GM12878 (cell line): ENCODE measurements at regions of chr1 and their contacts with region 1.

Region 1: GRCh38 chr1:51235673-51236530 is at the start of gene RNF11:
- DNase-seq: peak; percentile 54
- ATAC-seq: peak; percentile 87
- H3K4me3 ChIP-seq: peak within 1 kb of the TSS; percentile 99
- H3K27ac ChIP-seq: peak within 1 kb of the TSS; percentile 72
- H3K4me1 ChIP-seq: peaks cover 27% of the 10 kb centered on the region
- H3K27me3 ChIP-seq: no peaks in the 10 kb centered on the region
- CTCF ChIP-seq: no peak
- EP300 ChIP-seq: peak in 1 of 2 experiments; percentile 14; a peak in 1 of 4 replicates
- POLR2A ChIP-seq: peak; percentile 92
- RAD21 ChIP-seq: no peak
- polyA plus RNA-seq, gene RNF11: 9.5 to 14.5 TPM

Region 2: GRCh38 chr1:51247022-51247421 is 11.1 kb after region 1 on chr1:
- CTCF ChIA-PET with region 1: interaction called, 8 read pairs
- POLR2A ChIA-PET with region 1: interaction called, 7 read pairs
- RAD21 ChIA-PET with region 1: interaction called, 11 read pairs
- SMC1A ChIA-PET with region 1: interaction called, 13 read pairs
- in situ Hi-C with region 1: no loop called
- intact Hi-C with region 1: no loop called
- DNase-seq: no peak
- ATAC-seq: peak; percentile 96
- H3K4me3 ChIP-seq: no peak overlapping the region
- H3K27ac ChIP-seq: peak overlapping the region; percentile 37
- H3K4me1 ChIP-seq: peaks cover 23% of the 10 kb centered on the region
- H3K27me3 ChIP-seq: no peaks in the 10 kb centered on the region
- CTCF ChIP-seq: no peak
- EP300 ChIP-seq: peak; percentile 18 to 48; a peak in 2 of 4 replicates
- POLR2A ChIP-seq: no peak
- RAD21 ChIP-seq: no peak

Region 3: GRCh38 chr1:51253691-51254090 is 17.8 kb after region 1 on chr1:
- CTCF ChIA-PET with region 1: interaction called, 4 read pairs
- POLR2A ChIA-PET with region 1: interaction called, 4 read pairs
- RAD21 ChIA-PET with region 1: no interaction called
- SMC1A ChIA-PET with region 1: interaction called, 10 read pairs
- in situ Hi-C with region 1: no loop called
- intact Hi-C with region 1: no loop called
- DNase-seq: no peak
- ATAC-seq: no peak
- H3K4me3 ChIP-seq: no peak overlapping the region
- H3K27ac ChIP-seq: no peak overlapping the region
- H3K4me1 ChIP-seq: no peaks in the 10 kb centered on the region
- H3K27me3 ChIP-seq: no peaks in the 10 kb centered on the region
- CTCF ChIP-seq: no peak
- EP300 ChIP-seq: no peak
- POLR2A ChIP-seq: no peak
- RAD21 ChIP-seq: no peak

Region 4: DNA sequence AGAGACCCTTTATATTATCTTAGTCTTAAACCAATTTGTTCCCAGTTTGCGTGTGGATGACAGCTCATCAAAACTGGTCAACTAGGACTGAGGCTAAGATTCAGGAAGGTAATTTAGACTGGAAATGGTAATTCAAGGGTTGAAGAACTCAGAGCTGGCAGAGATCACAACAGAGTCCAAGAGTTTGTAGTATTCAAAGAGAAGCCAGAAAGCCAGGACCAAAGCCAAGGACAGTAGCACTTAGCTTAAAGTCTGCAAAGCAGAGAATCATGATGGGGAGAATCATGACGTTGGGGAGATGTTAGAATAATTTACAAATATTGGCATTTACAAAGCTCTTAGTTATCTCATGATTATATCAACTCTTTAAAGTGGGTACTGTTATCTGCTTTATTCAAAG is 32.7 kb after region 1 on chr1:
- CTCF ChIA-PET with region 1: interaction called, 4 read pairs
- POLR2A ChIA-PET with region 1: interaction called, 7 read pairs
- RAD21 ChIA-PET with region 1: interaction called, 13 read pairs
- SMC1A ChIA-PET with region 1: interaction called, 6 read pairs
- in situ Hi-C with region 1: no loop called
- intact Hi-C with region 1: no loop called
- DNase-seq: peak; percentile 30
- ATAC-seq: peak; percentile 75
- H3K4me3 ChIP-seq: peak overlapping the region; percentile 29; the same call in 1 of the 2 replicates
- H3K27ac ChIP-seq: peak overlapping the region; percentile 72
- H3K4me1 ChIP-seq: peaks cover 17% of the 10 kb centered on the region
- H3K27me3 ChIP-seq: no peaks in the 10 kb centered on the region
- CTCF ChIP-seq: no peak
- EP300 ChIP-seq: no peak
- POLR2A ChIP-seq: no peak
- RAD21 ChIP-seq: no peak

Region 5: GRCh38 chr1:51296383-51297357 is 60.8 kb after region 1 on chr1:
- CTCF ChIA-PET with region 1: interaction called, 6 read pairs
- POLR2A ChIA-PET with region 1: no interaction called
- RAD21 ChIA-PET with region 1: interaction called, 14 read pairs
- SMC1A ChIA-PET with region 1: interaction called, 9 read pairs
- in situ Hi-C with region 1: no loop called
- intact Hi-C with region 1: loop called (anchors 2 kb)
- DNase-seq: peak; percentile 51
- ATAC-seq: peak; percentile 81
- H3K4me3 ChIP-seq: peak overlapping the region; percentile 62; the same call in 1 of the 2 replicates
- H3K27ac ChIP-seq: peak overlapping the region; percentile 23; the same call in 1 of the 2 replicates
- H3K4me1 ChIP-seq: peaks cover 32% of the 10 kb centered on the region
- H3K27me3 ChIP-seq: no peaks in the 10 kb centered on the region; a peak in 1 of 4 replicates
- CTCF ChIP-seq: peak; percentile 92 to 99 (median 97)
- EP300 ChIP-seq: 0 out of 4 replicates have a peak, but pooled peaks of 1 of the 2 experiments have one; percentile 16
- POLR2A ChIP-seq: no peak; the same call in 1 of the 2 replicates
- RAD21 ChIP-seq: peak; percentile 97

Region 6: DNA sequence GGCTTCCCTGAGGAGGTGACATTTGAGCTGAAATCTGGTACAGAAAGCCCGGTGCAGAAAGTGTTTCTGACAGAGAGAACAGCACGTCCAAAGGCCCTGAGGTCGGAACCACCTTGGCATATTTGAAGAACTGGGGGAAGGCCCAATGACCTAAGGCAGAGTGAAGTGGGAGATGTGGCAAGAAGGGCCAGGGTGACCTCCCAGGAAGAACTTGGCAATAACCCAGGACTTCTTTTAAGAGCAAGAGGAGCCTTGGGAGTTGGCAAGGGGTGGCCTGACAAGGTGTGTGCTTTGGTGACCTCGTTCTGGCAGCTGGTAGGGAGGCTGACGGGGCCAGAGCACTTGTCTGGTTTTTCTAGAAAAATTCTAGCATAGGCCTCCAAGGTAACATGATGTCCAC is 71.0 kb after region 1 on chr1:
- CTCF ChIA-PET with region 1: no interaction called
- POLR2A ChIA-PET with region 1: no interaction called
- RAD21 ChIA-PET with region 1: no interaction called
- SMC1A ChIA-PET with region 1: no interaction called
- in situ Hi-C with region 1: no loop called
- intact Hi-C with region 1: no loop called
- DNase-seq: no peak
- ATAC-seq: no peak
- H3K4me3 ChIP-seq: no peak overlapping the region
- H3K27ac ChIP-seq: no peak overlapping the region
- H3K4me1 ChIP-seq: peaks cover 29% of the 10 kb centered on the region
- H3K27me3 ChIP-seq: no peaks in the 10 kb centered on the region
- CTCF ChIP-seq: no peak
- EP300 ChIP-seq: no peak
- POLR2A ChIP-seq: no peak
- RAD21 ChIP-seq: no peak

Region 7: DNA sequence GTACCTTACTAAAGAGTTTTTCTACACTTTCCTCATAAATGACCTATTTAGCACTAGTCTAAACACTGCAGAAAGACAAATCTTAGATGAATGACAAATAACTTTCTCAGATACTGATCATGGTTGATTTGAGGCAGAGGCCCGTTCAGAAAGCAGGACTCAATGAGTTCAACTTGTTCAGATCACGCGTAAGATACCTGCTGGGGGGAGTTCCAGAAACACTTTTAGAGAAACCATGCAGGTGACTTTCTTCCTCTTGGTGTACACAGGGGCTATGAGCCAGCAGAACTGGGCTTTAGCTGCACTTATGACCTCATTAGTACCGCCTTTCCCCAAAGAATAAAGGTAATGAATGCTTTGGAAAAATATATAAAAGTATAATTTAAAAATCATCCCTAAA is 133.3 kb after region 1 on chr1:
- CTCF ChIA-PET with region 1: no interaction called
- POLR2A ChIA-PET with region 1: no interaction called
- RAD21 ChIA-PET with region 1: no interaction called
- SMC1A ChIA-PET with region 1: no interaction called
- in situ Hi-C with region 1: no loop called
- intact Hi-C with region 1: no loop called
- DNase-seq: no peak
- ATAC-seq: no peak
- H3K4me3 ChIP-seq: no peak overlapping the region
- H3K27ac ChIP-seq: no peak overlapping the region
- H3K4me1 ChIP-seq: no peaks in the 10 kb centered on the region
- H3K27me3 ChIP-seq: no peaks in the 10 kb centered on the region
- CTCF ChIP-seq: no peak
- EP300 ChIP-seq: no peak
- POLR2A ChIP-seq: no peak
- RAD21 ChIP-seq: no peak